Naive thymus-derived CD4-positive, alpha-beta T cell (primary cell): ENCODE measurements at regions of chr2 and their contacts with region 1.

Region 1: DNA sequence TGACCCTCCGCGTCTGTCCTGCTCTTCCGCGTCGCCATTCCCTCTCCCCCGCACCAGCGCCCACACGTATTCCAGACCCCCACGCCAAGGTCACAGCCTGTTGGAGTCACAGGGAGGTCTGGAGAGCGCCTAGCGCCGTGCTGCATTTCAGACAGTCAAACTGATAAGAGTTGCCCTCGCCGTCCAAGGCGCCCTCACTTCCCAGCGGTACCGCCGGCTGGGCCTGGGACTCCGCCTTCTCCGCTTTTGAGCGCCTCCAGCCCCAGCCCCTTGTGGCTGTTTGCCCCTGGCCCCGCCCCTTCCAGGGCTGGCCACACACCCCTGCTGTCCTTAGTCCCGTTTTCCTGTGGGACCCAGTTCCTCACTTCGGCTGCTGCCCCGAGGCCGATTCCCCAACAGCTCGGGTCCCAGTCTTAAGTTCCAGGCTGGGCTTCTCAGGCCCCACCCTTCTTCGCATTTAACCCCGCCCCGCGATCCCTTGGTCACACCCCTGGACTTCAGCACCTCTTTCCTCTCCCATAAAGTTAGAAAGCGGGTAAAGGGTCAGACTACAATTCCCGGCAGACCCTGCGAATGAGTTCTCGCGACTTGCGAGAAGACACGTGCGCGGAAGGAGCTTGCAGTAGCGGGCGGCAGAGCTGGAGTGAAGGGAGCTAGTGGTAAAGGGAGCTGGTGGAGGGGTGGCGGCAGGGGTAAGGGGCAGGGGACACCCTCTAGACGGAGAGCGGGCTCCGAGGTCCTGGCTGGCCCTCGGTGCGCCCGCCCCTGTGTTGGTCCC is at the start of gene GMPPA:
- DNase-seq: peak; percentile 78 to 95 (median 90)
- ATAC-seq: peak; percentile 94
- H3K4me3 ChIP-seq: peak within 1 kb of the TSS; percentile 85
- H3K4me3 Mint-ChIP-seq: peak within 1 kb of the TSS; percentile 91 to 99 (median 96)
- H3K27ac ChIP-seq: peak within 1 kb of the TSS; percentile 79
- H3K27ac Mint-ChIP-seq: peak within 1 kb of the TSS; percentile 76 to 97 (median 86)
- H3K4me1 ChIP-seq: peaks cover 19 to 22% of the 10 kb centered on the region in 2 donors
- H3K4me1 Mint-ChIP-seq: peaks cover 26 to 42% (median 36%) of the 10 kb centered on the region in 7 donors
- H3K27me3 ChIP-seq: peaks cover 4 to 9% of the 10 kb centered on the region in 2 donors
- H3K27me3 Mint-ChIP-seq: peaks cover 28 to 47% (median 40%) of the 10 kb centered on the region in 5 donors
- total RNA-seq, gene GMPPA: 22.4 to 58.3 (median 37.2) TPM

Region 2: GRCh38 chr2:218898109-218898878 is 600.2 kb before region 1 on chr2:
- CTCF ChIA-PET with region 1: no interaction called
- POLR2A ChIA-PET with region 1: no interaction called
- intact Hi-C with region 1: loop called (anchors 5 to 10 kb)
- DNase-seq: peak; percentile 50 to 88 (median 72)
- ATAC-seq: peak; percentile 42
- H3K4me3 ChIP-seq: peak overlapping the region; percentile 65
- H3K4me3 Mint-ChIP-seq: peak overlapping the region; percentile 53 to 87 (median 82)
- H3K27ac ChIP-seq: no peak overlapping the region
- H3K27ac Mint-ChIP-seq: peak overlapping the region in 7 of 9 donors; percentile 33 to 92 (median 71)
- H3K4me1 ChIP-seq: peaks cover 40 to 49% of the 10 kb centered on the region in 2 donors
- H3K4me1 Mint-ChIP-seq: peaks cover 38 to 48% (median 42%) of the 10 kb centered on the region in 7 donors
- H3K27me3 ChIP-seq: peaks cover 0 to 3% of the 10 kb centered on the region in 2 donors
- H3K27me3 Mint-ChIP-seq: peaks cover 20 to 75% (median 40%) of the 10 kb centered on the region in 5 donors

Region 3: GRCh38 chr2:219344751-219345430 is 153.6 kb before region 1 on chr2:
- CTCF ChIA-PET with region 1: no interaction called
- POLR2A ChIA-PET with region 1: no interaction called
- intact Hi-C with region 1: no loop called
- DNase-seq: no peak
- ATAC-seq: no peak
- H3K4me3 ChIP-seq: no peak overlapping the region
- H3K4me3 Mint-ChIP-seq: no peak overlapping the region
- H3K27ac ChIP-seq: no peak overlapping the region
- H3K27ac Mint-ChIP-seq: no peak overlapping the region
- H3K4me1 ChIP-seq: no peaks in the 10 kb centered on the region
- H3K4me1 Mint-ChIP-seq: peaks cover 0 to 8% (median 0%) of the 10 kb centered on the region in 7 donors
- H3K27me3 ChIP-seq: no peaks in the 10 kb centered on the region
- H3K27me3 Mint-ChIP-seq: peaks cover 17 to 41% (median 32%) of the 10 kb centered on the region in 5 donors

Region 4: DNA sequence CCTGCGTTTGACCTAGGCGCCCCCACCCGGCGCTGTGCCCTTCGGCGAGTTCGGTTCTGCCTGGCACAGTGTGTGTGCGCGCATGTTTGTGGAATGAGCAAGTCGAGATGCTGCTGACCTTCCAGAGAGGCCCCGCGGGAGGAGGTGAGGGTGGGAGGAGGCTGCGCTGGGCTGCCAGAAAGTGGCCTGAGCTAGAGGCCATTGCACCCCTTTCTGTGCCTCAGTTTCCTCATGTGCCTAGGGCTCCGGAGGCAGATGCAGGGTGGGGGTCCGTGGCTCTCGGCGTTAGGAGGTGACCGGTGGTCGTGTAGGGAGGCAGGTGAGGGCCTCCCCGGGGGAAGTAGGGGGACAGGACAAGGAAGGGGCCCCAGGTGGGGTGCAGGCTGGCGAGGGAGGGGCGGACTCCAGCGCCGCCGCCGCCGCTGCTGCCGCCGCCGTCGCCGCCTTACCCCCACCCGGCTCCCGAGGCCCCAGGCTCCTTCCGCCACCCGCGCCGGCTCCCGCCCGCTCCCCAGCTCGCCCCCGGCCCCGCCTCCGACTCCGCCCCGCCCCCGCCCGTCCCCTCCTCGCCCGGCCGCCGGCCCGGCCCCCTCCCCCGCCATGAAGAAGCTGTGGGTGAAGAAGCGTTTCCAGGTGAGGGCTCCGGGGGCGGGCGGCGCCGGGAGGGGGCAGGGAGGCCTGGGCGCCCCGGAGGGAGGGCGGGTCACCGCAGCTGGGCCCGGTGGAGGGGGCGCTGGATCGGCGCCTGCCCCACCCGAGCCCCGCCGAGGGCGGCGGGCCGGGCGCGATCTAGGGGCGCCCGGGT is 56.8 kb before region 1 on chr2:
- CTCF ChIA-PET with region 1: interaction called, 4 read pairs
- POLR2A ChIA-PET with region 1: no interaction called
- intact Hi-C with region 1: loop called in 1 of 2 experiments (anchors 1 kb)
- DNase-seq: peak; percentile 23 to 54 (median 49)
- ATAC-seq: peak; percentile 77
- H3K4me3 ChIP-seq: peak overlapping the region; percentile 44
- H3K4me3 Mint-ChIP-seq: peak overlapping the region; percentile 77 to 92 (median 85)
- H3K27ac ChIP-seq: peak overlapping the region; percentile 14
- H3K27ac Mint-ChIP-seq: peak overlapping the region in 5 of 9 donors; percentile 1 to 83 (median 67)
- H3K4me1 ChIP-seq: peaks cover 2 to 9% of the 10 kb centered on the region in 2 donors
- H3K4me1 Mint-ChIP-seq: peaks cover 7 to 15% (median 13%) of the 10 kb centered on the region in 7 donors
- H3K27me3 ChIP-seq: peaks cover 0 to 2% of the 10 kb centered on the region in 2 donors
- H3K27me3 Mint-ChIP-seq: peaks cover 0 to 55% (median 0%) of the 10 kb centered on the region in 5 donors

Region 5: GRCh38 chr2:219509780-219510511 is 11.5 kb after region 1 on chr2:
- CTCF ChIA-PET with region 1: interaction called, 8 read pairs
- POLR2A ChIA-PET with region 1: interaction called, 3 read pairs
- intact Hi-C with region 1: loop called in 1 of 2 experiments (anchors 1 kb)
- DNase-seq: peak in 8 of 9 donors; percentile 28 to 55 (median 46)
- ATAC-seq: peak; percentile 84
- H3K4me3 ChIP-seq: no peak overlapping the region
- H3K4me3 Mint-ChIP-seq: peak overlapping the region; percentile 23 to 82 (median 67)
- H3K27ac ChIP-seq: no peak overlapping the region
- H3K27ac Mint-ChIP-seq: no peak overlapping the region
- H3K4me1 ChIP-seq: peaks cover 0 to 12% of the 10 kb centered on the region in 2 donors
- H3K4me1 Mint-ChIP-seq: peaks cover 14 to 30% (median 27%) of the 10 kb centered on the region in 7 donors
- H3K27me3 ChIP-seq: peaks cover 0 to 8% of the 10 kb centered on the region in 2 donors
- H3K27me3 Mint-ChIP-seq: peaks cover 40 to 55% (median 45%) of the 10 kb centered on the region in 5 donors

Region 6: GRCh38 chr2:219597552-219598307 is 99.3 kb after region 1 on chr2 and contains the start of gene STK11IP:
- CTCF ChIA-PET with region 1: interaction called, 3 read pairs
- POLR2A ChIA-PET with region 1: interaction called, 3 read pairs
- intact Hi-C with region 1: loop called (anchors 1 kb)
- DNase-seq: peak; percentile 76 to 91 (median 87)
- ATAC-seq: peak; percentile 91
- H3K4me3 ChIP-seq: peak within 1 kb of the TSS; percentile 86
- H3K4me3 Mint-ChIP-seq: peak within 1 kb of the TSS; percentile 89 to 99 (median 96)
- H3K27ac ChIP-seq: peak within 1 kb of the TSS; percentile 80
- H3K27ac Mint-ChIP-seq: peak within 1 kb of the TSS; percentile 93 to 98 (median 94)
- H3K4me1 ChIP-seq: peaks cover 5 to 15% of the 10 kb centered on the region in 2 donors
- H3K4me1 Mint-ChIP-seq: peaks cover 14 to 30% (median 21%) of the 10 kb centered on the region in 7 donors
- H3K27me3 ChIP-seq: no peaks in the 10 kb centered on the region
- H3K27me3 Mint-ChIP-seq: peaks cover 3 to 10% (median 6%) of the 10 kb centered on the region in 5 donors
- total RNA-seq, gene STK11IP: 33.6 to 46.4 (median 42.6) TPM